AG04449 (cell line): ENCODE measurements at regions of chr1 and their contacts with region 1.

Region 1: GRCh38 chr1:89762779-89763648 is 57.8 kb upstream of the LRRC8D start:
- DNase-seq: peak; percentile 19
- H3K4me3 ChIP-seq: peak overlapping the region; percentile 66
- CTCF ChIP-seq: peak; percentile 99

Region 2: GRCh38 chr1:89483010-89483756 is 279.8 kb before region 1 on chr1:
- CTCF ChIA-PET with region 1: interaction called, 114 read pairs
- POLR2A ChIA-PET with region 1: no interaction called
- DNase-seq: peak; percentile 50
- H3K4me3 ChIP-seq: no peak overlapping the region
- CTCF ChIP-seq: peak; percentile 75

Region 3: GRCh38 chr1:89598450-89599331 is 164.3 kb before region 1 on chr1:
- CTCF ChIA-PET with region 1: interaction called, 142 read pairs
- POLR2A ChIA-PET with region 1: no interaction called
- DNase-seq: no peak
- H3K4me3 ChIP-seq: no peak overlapping the region
- CTCF ChIP-seq: peak; percentile 47

Region 4: GRCh38 chr1:89622895-89623294 is 140.1 kb before region 1 on chr1:
- CTCF ChIA-PET with region 1: interaction called, 259 read pairs
- POLR2A ChIA-PET with region 1: no interaction called
- DNase-seq: no peak
- H3K4me3 ChIP-seq: no peak overlapping the region
- CTCF ChIP-seq: no peak

Region 5: GRCh38 chr1:89739844-89740216 is 23.2 kb before region 1 on chr1:
- CTCF ChIA-PET with region 1: interaction called, 24 read pairs
- POLR2A ChIA-PET with region 1: no interaction called
- DNase-seq: no peak
- H3K4me3 ChIP-seq: no peak overlapping the region
- CTCF ChIP-seq: no peak

Region 6: GRCh38 chr1:89794406-89794805 is 31.4 kb after region 1 on chr1:
- CTCF ChIA-PET with region 1: interaction called, 12 read pairs
- POLR2A ChIA-PET with region 1: no interaction called
- DNase-seq: no peak
- H3K4me3 ChIP-seq: no peak overlapping the region
- CTCF ChIP-seq: no peak